Astrocyte of the cerebellum (primary cell): ENCODE measurements at regions of chr2 and their contacts with region 1.

Region 1: DNA sequence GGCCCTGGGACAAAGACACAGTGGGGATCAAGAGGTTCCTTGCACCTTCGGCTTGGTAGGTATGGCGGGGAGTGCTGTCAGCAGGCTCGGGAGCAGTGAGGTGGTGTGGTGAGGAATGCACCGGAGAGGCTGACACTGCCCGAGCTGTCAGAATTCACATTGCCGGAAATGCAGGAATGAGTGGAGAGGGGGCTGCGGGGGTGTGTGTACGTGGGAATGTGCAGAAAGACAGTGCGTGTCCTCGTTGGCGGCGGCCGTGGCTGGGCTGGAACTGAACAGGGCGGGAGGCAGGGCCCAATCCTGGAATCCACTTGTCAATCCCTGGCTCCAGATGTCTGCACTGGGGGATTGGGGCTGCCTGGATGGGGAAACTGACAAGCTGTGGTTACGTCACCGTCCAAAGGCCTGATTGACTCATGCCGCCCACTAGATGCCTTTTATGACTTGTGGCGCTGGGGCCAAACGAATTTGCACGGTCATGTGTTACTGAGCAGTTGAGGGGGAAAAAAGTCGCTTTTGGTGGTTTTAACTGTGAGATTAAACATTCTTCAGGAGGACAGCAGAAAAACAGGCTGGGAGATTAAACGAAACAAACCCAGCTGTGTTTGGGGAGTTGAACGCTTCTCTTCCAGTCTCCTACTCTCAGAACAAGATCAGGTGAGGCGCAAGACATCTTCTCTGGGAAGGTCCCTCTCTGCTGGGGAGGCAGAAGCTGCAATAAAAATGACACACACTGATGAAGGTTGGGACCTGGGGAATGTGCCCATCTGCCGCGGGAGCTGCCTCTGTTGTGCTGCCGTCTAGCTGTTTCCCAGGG is 189.4 kb upstream of the GLI2 start:
- DNase-seq: peak; percentile 59
- H3K4me3 ChIP-seq: no peak overlapping the region
- CTCF ChIP-seq: no peak

Region 2: DNA sequence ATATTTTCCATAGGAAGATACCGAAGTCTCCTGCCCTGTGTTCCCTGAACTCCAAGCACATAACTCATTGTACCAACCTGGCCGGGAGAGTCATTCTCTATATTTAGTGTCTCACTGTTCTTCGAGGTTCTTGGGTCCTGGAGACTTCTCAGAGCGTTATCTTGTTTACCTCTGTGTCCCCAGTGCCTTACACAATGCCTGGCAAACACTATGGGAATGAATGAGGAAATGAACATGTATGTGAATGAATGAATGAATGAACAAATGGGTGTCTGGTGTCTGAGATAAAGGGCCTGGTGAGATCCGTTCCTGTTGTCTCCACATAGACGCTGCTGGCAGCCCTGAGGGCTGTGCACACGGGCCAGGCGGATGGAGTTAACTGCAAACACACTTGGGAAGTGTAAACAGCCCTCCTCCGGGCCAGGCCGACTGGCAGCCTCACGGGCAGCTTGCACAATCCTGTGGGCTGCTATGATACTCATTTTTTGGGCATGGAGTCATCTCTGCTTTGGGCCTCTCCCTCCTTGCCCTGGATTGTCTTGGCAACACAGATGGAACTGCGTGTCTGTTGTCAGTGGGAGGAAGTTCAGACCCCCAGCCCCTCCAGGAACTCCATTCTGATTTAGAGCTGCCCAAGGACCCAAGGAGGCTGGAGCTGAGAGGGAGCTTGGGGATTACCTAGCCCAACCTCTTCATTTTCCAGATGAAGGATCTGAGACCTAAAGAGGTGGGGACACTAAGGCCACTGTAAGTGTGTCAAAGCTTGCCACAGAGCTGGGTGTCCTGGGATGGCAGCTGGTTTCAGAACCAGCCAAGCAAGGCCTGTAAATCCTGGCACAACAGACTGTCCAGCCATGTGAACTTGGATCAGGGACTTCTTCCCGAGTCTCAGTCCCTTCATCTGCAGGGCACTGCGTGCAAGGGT is 76.0 kb before region 1 on chr2:
- in situ Hi-C with region 1: loop called (anchors 5 kb)
- DNase-seq: peak; percentile 65
- H3K4me3 ChIP-seq: no peak overlapping the region
- CTCF ChIP-seq: no peak